Caco-2 (cell line): ENCODE measurements at regions of chr21 and their contacts with region 1.

Region 1: DNA sequence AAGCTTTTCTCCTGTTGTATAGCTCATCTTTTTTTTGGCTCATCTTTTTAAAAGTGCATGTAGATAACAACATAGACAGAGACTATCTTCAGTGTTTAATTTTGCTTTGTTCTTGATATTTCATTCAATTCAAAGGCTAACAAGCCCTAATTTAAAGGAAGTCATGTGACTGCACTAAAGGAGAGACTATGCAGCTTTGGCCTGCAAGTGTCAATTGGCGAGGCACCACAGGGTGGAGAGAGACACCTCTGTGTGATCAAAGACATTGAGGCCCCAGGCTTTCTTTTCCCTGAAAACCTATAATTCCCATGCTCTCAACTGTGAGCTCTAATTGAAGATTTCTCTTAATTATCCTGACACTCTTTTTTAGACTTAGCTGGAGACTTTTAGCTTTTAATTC is 53.6 kb downstream of the CHODL start:
- DNase-seq: no peak
- H3K4me3 ChIP-seq: no peak overlapping the region
- H3K4me3 Mint-ChIP-seq: no peak overlapping the region
- H3K27ac Mint-ChIP-seq: no peak overlapping the region
- H3K4me1 ChIP-seq: no peaks in the 10 kb centered on the region
- H3K4me1 Mint-ChIP-seq: no peaks in the 10 kb centered on the region
- H3K27me3 ChIP-seq: no peaks in the 10 kb centered on the region
- H3K27me3 Mint-ChIP-seq: peaks cover 14% of the 10 kb centered on the region
- CTCF ChIP-seq: no peak

Region 2: DNA sequence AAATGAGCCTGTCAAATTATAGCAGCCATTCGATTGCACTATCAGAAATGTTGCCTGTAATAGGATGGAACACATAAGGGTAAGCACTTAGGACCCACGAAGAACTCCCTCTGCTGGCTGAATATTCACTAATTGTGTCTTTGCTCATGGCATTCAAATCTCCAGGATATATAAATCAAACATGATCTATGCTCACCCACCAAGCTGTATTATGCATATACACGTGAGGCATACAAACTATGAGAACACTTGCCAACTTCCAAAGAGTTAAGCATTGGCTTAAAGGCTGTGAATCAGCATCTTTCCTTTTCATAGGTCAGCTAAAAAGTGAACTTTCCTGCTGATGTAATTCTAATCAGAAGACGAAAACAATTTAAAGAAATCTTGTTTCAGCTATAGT is 70.9 kb after region 1 on chr21:
- CTCF ChIA-PET with region 1: no interaction called
- POLR2A ChIA-PET with region 1: no interaction called
- intact Hi-C with region 1: loop called (anchors 1 kb)
- DNase-seq: peak in 1 of 2 experiments; percentile 9
- H3K4me3 ChIP-seq: no peak overlapping the region
- H3K4me3 Mint-ChIP-seq: no peak overlapping the region
- H3K27ac Mint-ChIP-seq: no peak overlapping the region
- H3K4me1 ChIP-seq: no peaks in the 10 kb centered on the region
- H3K4me1 Mint-ChIP-seq: no peaks in the 10 kb centered on the region
- H3K27me3 ChIP-seq: no peaks in the 10 kb centered on the region
- H3K27me3 Mint-ChIP-seq: peaks cover 4% of the 10 kb centered on the region
- CTCF ChIP-seq: peak in 1 of 2 experiments; percentile 54

Region 3: GRCh38 chr21:18382141-18382540 is 83.9 kb after region 1 on chr21:
- CTCF ChIA-PET with region 1: no interaction called
- POLR2A ChIA-PET with region 1: no interaction called
- intact Hi-C with region 1: no loop called
- DNase-seq: no peak
- H3K4me3 ChIP-seq: no peak overlapping the region
- H3K4me3 Mint-ChIP-seq: no peak overlapping the region
- H3K27ac Mint-ChIP-seq: no peak overlapping the region
- H3K4me1 ChIP-seq: no peaks in the 10 kb centered on the region
- H3K4me1 Mint-ChIP-seq: no peaks in the 10 kb centered on the region
- H3K27me3 ChIP-seq: no peaks in the 10 kb centered on the region
- H3K27me3 Mint-ChIP-seq: no peaks in the 10 kb centered on the region
- CTCF ChIP-seq: no peak

Region 4: DNA sequence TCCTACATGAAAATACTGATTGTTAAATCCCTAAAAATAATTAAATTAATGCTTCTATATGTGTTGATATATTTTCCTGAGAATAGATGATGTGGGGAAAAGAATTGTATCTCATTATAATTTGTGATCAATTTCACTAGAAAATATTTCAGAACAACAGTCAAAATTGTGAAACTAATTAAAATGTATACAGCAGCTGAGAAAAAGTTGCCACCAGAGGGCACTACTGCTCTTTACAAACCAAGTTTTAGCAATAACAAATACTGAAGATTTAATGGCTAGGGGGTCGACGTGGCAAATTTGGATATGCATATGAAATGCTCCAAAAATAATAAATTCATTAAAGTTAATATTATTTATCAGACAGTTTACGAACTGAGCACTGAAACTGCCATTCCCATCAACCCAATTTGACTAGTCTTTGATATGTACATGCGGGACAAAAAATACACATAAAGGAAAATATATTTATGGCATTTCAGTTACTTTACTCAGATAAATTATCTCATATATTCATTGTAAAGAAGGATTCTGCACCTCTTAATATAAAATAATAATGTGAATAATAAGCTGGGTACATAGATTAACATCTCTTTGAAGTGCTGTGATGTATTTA is 201.6 kb after region 1 on chr21:
- CTCF ChIA-PET with region 1: no interaction called
- POLR2A ChIA-PET with region 1: no interaction called
- intact Hi-C with region 1: loop called (anchors 10 kb)
- DNase-seq: peak; percentile 36 to 46
- H3K4me3 ChIP-seq: no peak overlapping the region
- H3K4me3 Mint-ChIP-seq: no peak overlapping the region
- H3K27ac Mint-ChIP-seq: no peak overlapping the region
- H3K4me1 ChIP-seq: no peaks in the 10 kb centered on the region
- H3K4me1 Mint-ChIP-seq: no peaks in the 10 kb centered on the region
- H3K27me3 ChIP-seq: no peaks in the 10 kb centered on the region
- H3K27me3 Mint-ChIP-seq: no peaks in the 10 kb centered on the region
- CTCF ChIP-seq: peak; percentile 68 to 69